T-cell (primary cell): ENCODE measurements at regions of chr14 and their contacts with region 1.

Region 1: GRCh38 chr14:61559640-61560201 is 135.6 kb upstream of the HIF1A start:
- DNase-seq: no peak
- ATAC-seq: no peak
- H3K4me3 ChIP-seq: no peak overlapping the region
- H3K4me3 Mint-ChIP-seq: no peak overlapping the region
- H3K27ac ChIP-seq: no peak overlapping the region
- H3K27ac Mint-ChIP-seq: peak overlapping the region in 1 of 2 donors; percentile 23
- H3K4me1 ChIP-seq: peaks cover 0 to 4% of the 10 kb centered on the region in 2 experiments
- H3K4me1 Mint-ChIP-seq: peaks cover 18 to 33% (median 32%) of the 10 kb centered on the region in 3 donors
- H3K27me3 ChIP-seq: no peaks in the 10 kb centered on the region
- H3K27me3 Mint-ChIP-seq: no peaks in the 10 kb centered on the region

Region 2: GRCh38 chr14:61470261-61470960 is 89.3 kb before region 1 on chr14:
- CTCF ChIA-PET with region 1: no interaction called
- POLR2A ChIA-PET with region 1: no interaction called
- DNase-seq: no peak
- ATAC-seq: no peak
- H3K4me3 ChIP-seq: no peak overlapping the region
- H3K4me3 Mint-ChIP-seq: peak overlapping the region; percentile 78 to 89 (median 84)
- H3K27ac ChIP-seq: peak overlapping the region; percentile 83
- H3K27ac Mint-ChIP-seq: peak overlapping the region; percentile 96
- H3K4me1 ChIP-seq: peaks cover 48 to 91% of the 10 kb centered on the region in 2 experiments
- H3K4me1 Mint-ChIP-seq: peaks cover 94 to 96% (median 96%) of the 10 kb centered on the region in 3 donors
- H3K27me3 ChIP-seq: no peaks in the 10 kb centered on the region
- H3K27me3 Mint-ChIP-seq: no peaks in the 10 kb centered on the region

Region 3: DNA sequence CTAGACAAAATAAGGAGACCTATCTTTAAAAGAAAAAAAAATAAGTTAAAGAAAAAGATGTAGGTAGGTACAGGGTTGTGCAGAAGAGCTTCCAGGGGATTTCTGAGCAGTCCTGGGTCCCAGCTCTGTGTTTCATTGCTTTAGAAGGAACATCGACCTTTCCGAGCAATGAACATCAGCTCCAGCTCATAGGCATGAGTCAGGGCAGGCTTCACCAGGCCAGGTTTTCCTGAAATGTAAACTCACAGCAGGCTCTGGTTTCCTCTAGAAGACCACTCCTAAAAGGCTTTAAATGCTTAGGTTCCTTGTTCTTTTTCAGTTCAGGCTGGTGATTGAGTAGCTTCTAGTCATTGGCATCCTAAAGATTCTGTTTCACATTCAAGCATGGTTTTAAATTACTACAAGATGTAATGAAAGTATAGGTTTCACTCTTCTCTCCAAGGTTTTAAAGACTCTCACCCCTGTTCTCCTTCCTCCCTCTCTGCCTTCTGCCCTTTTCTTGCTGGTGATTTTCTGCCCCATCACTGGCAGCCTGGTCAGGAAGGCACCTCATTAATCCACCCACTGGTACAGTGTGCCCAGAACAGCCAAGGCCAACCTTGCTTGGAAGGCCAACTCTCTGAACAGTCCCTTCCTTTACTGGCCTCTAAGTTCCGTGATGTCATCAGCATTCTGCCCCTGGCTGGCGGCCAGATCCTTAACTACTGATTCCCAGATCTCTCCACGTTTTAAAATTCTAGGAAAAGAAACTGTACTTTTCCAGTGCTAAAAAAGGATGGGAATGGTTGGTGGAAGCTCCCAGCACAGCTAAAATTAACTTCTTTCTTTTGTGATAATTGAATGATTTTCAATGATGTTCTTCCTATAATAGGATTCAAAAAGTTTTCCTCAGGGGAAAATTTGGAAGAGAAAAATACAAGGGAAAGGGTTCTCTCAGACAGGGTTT is 26.1 kb after region 1 on chr14:
- CTCF ChIA-PET with region 1: no interaction called
- POLR2A ChIA-PET with region 1: no interaction called
- DNase-seq: no peak
- ATAC-seq: no peak
- H3K4me3 ChIP-seq: no peak overlapping the region
- H3K4me3 Mint-ChIP-seq: no peak overlapping the region
- H3K27ac ChIP-seq: no peak overlapping the region
- H3K27ac Mint-ChIP-seq: no peak overlapping the region
- H3K4me1 ChIP-seq: peaks cover 0 to 10% of the 10 kb centered on the region in 2 experiments
- H3K4me1 Mint-ChIP-seq: peaks cover 10 to 18% (median 11%) of the 10 kb centered on the region in 3 donors
- H3K27me3 ChIP-seq: no peaks in the 10 kb centered on the region
- H3K27me3 Mint-ChIP-seq: no peaks in the 10 kb centered on the region

Region 4: DNA sequence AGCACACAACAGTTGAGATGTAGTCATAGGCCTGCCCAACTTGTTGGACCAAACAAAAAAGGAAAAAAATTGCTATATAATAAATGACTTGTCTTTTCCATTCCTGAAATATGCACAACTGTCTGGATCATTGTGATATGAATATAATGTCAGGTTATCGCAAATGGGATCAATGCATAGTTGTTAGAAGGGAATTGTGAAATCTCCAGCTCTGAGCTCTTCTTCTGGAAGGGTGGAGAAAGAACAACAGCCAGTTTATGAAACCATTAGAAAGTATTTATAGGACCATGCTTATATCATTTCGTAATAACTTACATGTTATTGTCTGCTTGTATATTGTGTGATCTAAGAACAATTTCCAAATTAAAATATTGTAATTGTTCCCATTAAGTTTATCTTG is 99.8 kb after region 1 on chr14:
- CTCF ChIA-PET with region 1: no interaction called
- POLR2A ChIA-PET with region 1: no interaction called
- DNase-seq: no peak
- ATAC-seq: no peak
- H3K4me3 ChIP-seq: no peak overlapping the region
- H3K4me3 Mint-ChIP-seq: no peak overlapping the region
- H3K27ac ChIP-seq: no peak overlapping the region
- H3K27ac Mint-ChIP-seq: peak overlapping the region; percentile 88 to 96
- H3K4me1 ChIP-seq: peaks cover 43 to 47% of the 10 kb centered on the region in 2 experiments
- H3K4me1 Mint-ChIP-seq: peaks cover 65 to 78% (median 71%) of the 10 kb centered on the region in 3 donors
- H3K27me3 ChIP-seq: no peaks in the 10 kb centered on the region
- H3K27me3 Mint-ChIP-seq: no peaks in the 10 kb centered on the region

Region 5: GRCh38 chr14:61977788-61978187 is 418.1 kb after region 1 on chr14:
- CTCF ChIA-PET with region 1: no interaction called
- POLR2A ChIA-PET with region 1: interaction called in 1 of 2 experiments, 10 read pairs
- DNase-seq: no peak
- ATAC-seq: no peak
- H3K4me3 ChIP-seq: no peak overlapping the region
- H3K4me3 Mint-ChIP-seq: no peak overlapping the region
- H3K27ac ChIP-seq: no peak overlapping the region
- H3K27ac Mint-ChIP-seq: no peak overlapping the region
- H3K4me1 ChIP-seq: no peaks in the 10 kb centered on the region
- H3K4me1 Mint-ChIP-seq: no peaks in the 10 kb centered on the region
- H3K27me3 ChIP-seq: no peaks in the 10 kb centered on the region
- H3K27me3 Mint-ChIP-seq: peaks cover 11 to 39% of the 10 kb centered on the region in 2 donors